Uterus (tissue), 4 donors: ENCODE measurements at regions of chr9 and their contacts with region 1.

Region 1: DNA sequence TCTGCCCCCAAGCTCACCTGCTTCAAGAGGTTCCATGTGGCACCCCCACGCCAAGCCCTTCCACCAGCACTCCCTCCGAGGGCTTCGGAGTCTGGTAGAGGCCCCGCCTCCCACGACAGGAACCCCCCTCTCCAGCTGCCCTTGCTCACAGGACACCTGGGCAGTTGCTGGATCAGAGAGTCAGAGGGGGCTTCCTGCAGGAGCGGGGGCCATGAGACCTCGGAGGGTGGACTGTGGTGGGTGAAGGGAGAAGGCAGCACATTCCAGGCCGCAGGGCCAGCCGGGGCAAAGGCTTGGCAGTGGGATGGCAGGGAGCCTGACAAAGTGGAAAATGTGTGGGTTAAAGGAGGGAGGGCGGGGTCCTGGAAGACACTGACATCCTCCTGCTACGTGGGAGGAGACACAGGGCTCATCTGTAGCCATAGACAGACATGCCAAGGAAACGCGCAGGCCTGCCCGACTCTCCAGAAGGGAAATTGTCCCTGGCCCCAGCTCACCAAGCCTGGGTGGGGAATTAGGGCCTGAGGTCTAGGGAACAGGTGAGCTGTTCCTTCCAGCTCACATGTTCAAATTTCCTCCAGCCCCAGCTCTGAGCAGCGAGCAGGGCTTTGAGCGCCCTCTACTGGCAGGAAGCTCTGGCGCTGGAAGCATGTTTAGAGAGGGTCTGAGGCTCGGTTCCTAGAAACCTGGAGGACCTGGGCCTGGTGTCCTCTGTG is 74.2 kb downstream of the NTNG2 start:
- DNase-seq: peak; percentile 72 to 75
- H3K4me3 ChIP-seq: no peak overlapping the region
- H3K27ac ChIP-seq: no peak overlapping the region
- H3K4me1 ChIP-seq: no peaks in the 10 kb centered on the region
- H3K27me3 ChIP-seq: no peaks in the 10 kb centered on the region
- CTCF ChIP-seq: peak; percentile 84 to 87 (median 86)
- POLR2A ChIP-seq: no peak

Region 2: GRCh38 chr9:131762356-131762932 is 473.7 kb before region 1 on chr9:
- intact Hi-C with region 1: loop called (anchors 10 kb)
- DNase-seq: peak; percentile 54 to 66
- H3K4me3 ChIP-seq: no peak overlapping the region
- H3K27ac ChIP-seq: no peak overlapping the region
- H3K4me1 ChIP-seq: no peaks in the 10 kb centered on the region
- H3K27me3 ChIP-seq: no peaks in the 10 kb centered on the region
- CTCF ChIP-seq: peak; percentile 91 to 97 (median 92)
- POLR2A ChIP-seq: no peak

Region 3: GRCh38 chr9:132135456-132135855 is 100.6 kb before region 1 on chr9:
- intact Hi-C with region 1: no loop called
- DNase-seq: no peak
- H3K4me3 ChIP-seq: no peak overlapping the region
- H3K27ac ChIP-seq: no peak overlapping the region
- H3K4me1 ChIP-seq: no peaks in the 10 kb centered on the region
- H3K27me3 ChIP-seq: peaks cover 0 to 6% of the 10 kb centered on the region in 2 donors
- CTCF ChIP-seq: no peak
- POLR2A ChIP-seq: no peak